PC-9 (cell line): ENCODE measurements at regions of chr12 and their contacts with region 1.

Region 1: GRCh38 chr12:25195056-25195971 is at the starts of genes DNAI7 and ETFRF1:
- DNase-seq: peak; percentile 87 to 99
- H3K4me3 ChIP-seq: peak within 1 kb of the TSS; percentile 84
- H3K27ac ChIP-seq: peak within 1 kb of the TSS; percentile 66
- H3K4me1 ChIP-seq: peaks cover 19% of the 10 kb centered on the region; the same call in 1 of the 2 replicates
- H3K27me3 ChIP-seq: no peaks in the 10 kb centered on the region
- CTCF ChIP-seq: no peak
- total RNA-seq, gene DNAI7: 2.4 and 2.9 TPM in 2 replicates
- total RNA-seq, gene ETFRF1: 11.6 and 15.9 TPM in 2 replicates

Region 2: GRCh38 chr12:25236190-25236589 is 40.9 kb after region 1 on chr12:
- CTCF ChIA-PET with region 1: no interaction called
- POLR2A ChIA-PET with region 1: interaction called, 10 read pairs
- intact Hi-C with region 1: no loop called
- DNase-seq: no peak
- H3K4me3 ChIP-seq: no peak overlapping the region
- H3K27ac ChIP-seq: no peak overlapping the region
- H3K4me1 ChIP-seq: no peaks in the 10 kb centered on the region
- H3K27me3 ChIP-seq: no peaks in the 10 kb centered on the region
- CTCF ChIP-seq: no peak

Region 3: GRCh38 chr12:25332143-25332542 is 136.8 kb after region 1 on chr12:
- CTCF ChIA-PET with region 1: no interaction called
- POLR2A ChIA-PET with region 1: interaction called, 20 read pairs
- intact Hi-C with region 1: no loop called
- DNase-seq: no peak
- H3K4me3 ChIP-seq: no peak overlapping the region
- H3K27ac ChIP-seq: no peak overlapping the region
- H3K4me1 ChIP-seq: peaks cover 11% of the 10 kb centered on the region
- H3K27me3 ChIP-seq: no peaks in the 10 kb centered on the region
- CTCF ChIP-seq: no peak